HEK293 (cell line): ENCODE measurements at regions of chr14 and their contacts with region 1.

Region 1: GRCh38 chr14:61694830-61695694 is at the start of gene HIF1A:
- H3K4me3 ChIP-seq: peak within 1 kb of the TSS; percentile 93
- H3K27ac ChIP-seq: peak within 1 kb of the TSS; percentile 98
- H3K4me1 ChIP-seq: peaks cover 12% of the 10 kb centered on the region; the same call in 1 of the 2 replicates
- CTCF ChIP-seq: peak; percentile 62; the same call in 1 of the 2 replicates

Region 2: DNA sequence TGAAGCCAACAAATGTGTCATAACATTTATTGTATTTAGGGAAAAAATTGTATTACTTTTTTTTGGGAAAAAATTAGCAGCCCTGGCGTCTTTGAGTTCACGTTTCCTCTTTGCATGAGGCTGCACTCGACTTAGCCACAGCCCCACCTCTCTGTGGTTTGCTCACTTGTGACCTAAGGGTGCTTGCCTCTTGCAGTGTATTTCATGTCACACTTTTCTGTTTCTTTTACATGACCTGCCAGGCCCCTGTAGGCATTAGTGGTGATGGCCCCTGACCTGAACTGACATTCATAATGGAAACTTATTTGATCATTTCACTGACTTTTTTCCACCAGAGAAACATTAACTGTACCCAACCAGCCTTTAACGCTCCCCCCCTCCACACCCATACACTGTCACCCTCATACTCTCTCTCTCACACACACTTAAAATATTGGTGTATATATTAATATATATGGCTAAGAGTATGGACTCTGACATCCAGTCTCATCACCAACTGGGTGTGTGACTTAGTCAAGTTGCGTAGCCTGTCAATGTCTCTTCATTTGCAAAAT is 250.8 kb before region 1 on chr14:
- CTCF ChIA-PET with region 1: no interaction called
- POLR2A ChIA-PET with region 1: no interaction called
- H3K4me3 ChIP-seq: no peak overlapping the region
- H3K27ac ChIP-seq: no peak overlapping the region
- H3K4me1 ChIP-seq: peaks cover 9% of the 10 kb centered on the region
- CTCF ChIP-seq: no peak

Region 3: DNA sequence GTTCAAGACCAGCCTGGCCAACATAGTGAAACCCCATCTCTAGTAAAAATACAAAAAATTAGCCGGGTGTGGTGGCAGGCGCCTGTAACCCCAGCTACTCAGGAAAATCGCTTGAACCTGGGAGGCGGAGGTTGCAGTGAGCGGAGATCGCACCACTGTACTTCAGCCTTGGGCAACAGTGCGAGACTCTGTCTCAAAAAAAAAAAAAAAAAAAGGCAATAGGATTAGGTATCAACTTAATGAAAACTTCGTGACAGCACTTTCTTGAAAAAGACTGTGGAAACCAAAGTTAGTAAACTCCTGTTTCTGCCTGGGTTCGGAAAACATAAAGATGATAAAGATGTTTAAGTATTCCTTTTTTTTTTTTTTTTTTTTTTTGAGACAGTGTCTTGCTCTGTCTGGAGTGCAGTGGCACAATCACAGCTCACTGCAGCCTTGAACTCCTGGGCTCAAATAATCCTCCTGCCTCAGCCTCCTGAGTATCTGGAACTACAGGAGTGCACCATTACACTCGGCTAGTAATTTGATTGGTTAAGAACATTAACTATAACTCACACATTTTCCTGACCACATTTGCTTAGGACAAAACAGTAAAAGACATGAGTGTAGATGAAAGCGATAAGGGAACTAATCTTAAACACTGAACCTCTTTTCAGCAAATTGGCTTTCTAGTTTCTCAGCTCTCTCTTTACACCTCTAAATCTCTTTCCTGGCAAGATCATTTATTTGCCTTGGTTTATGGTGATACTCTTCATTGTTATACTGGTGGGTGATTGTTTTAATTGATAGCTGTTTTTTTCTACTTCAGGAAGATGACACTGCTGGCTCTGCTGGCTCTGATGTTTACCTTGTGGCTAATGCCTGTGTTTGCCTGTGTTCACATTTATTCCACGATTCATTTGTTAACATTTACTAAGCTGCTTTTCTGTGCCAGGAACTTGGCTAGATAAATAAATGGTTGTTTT is 16.1 kb after region 1 on chr14:
- CTCF ChIA-PET with region 1: no interaction called
- POLR2A ChIA-PET with region 1: interaction called, 10 read pairs
- H3K4me3 ChIP-seq: no peak overlapping the region
- H3K27ac ChIP-seq: no peak overlapping the region
- H3K4me1 ChIP-seq: peaks cover 16% of the 10 kb centered on the region
- CTCF ChIP-seq: no peak